ENCODE measurements at regions of chr1 and their contacts with region 1.

Region 1: GRCh38 chr1:164765557-164765956 is 206.6 kb downstream of the PBX1 start:
- DNase-seq: peak; percentile 93
- ATAC-seq: peak; percentile 52
- H3K4me3 ChIP-seq: no peak overlapping the region
- H3K27ac ChIP-seq: peak overlapping the region; percentile 38
- H3K4me1 ChIP-seq: peaks cover 26% of the 10 kb centered on the region
- H3K27me3 ChIP-seq: no peaks in the 10 kb centered on the region
- CTCF ChIP-seq: no peak
- POLR2A ChIP-seq: 0 out of 2 replicates have a peak, but pooled peaks have one; percentile 36
- RAD21 ChIP-seq: no peak

Region 2: GRCh38 chr1:164558461-164559341 is 206.9 kb before region 1 on chr1 and contains the start of gene PBX1:
- CTCF ChIA-PET with region 1: no interaction called
- POLR2A ChIA-PET with region 1: no interaction called
- dilution Hi-C with region 1: no loop called
- in situ Hi-C with region 1: no loop called
- intact Hi-C with region 1: loop called (anchors 1 kb)
- DNase-seq: peak; percentile 98
- ATAC-seq: peak; percentile 98
- H3K4me3 ChIP-seq: peak within 1 kb of the TSS; percentile 75
- H3K27ac ChIP-seq: peak within 1 kb of the TSS; percentile 99
- H3K4me1 ChIP-seq: no peaks in the 10 kb centered on the region
- H3K27me3 ChIP-seq: no peaks in the 10 kb centered on the region
- CTCF ChIP-seq: no peak
- POLR2A ChIP-seq: peak; percentile 88
- RAD21 ChIP-seq: no peak; the same call in 1 of the 2 replicates
- total RNA-seq, gene PBX1: 17.5 and 17.9 TPM in 2 replicates

Region 3: DNA sequence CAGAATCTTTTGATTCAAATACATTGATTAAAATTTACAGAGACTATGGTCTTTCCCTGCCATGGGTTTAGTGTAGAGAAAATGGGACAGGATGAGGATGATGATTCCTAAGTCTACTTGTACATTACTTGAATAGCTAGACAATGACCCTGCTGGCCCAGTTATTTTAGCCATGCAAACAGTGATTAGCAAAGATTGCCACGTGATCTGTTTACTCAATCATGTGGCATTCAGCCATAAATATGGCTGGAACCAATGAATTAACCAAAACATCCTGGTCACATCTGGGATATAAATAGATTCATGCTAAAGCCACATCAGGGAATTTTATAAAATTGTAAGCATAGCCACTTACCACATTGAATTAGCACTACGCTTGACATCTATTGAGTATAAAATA is 39.3 kb before region 1 on chr1:
- CTCF ChIA-PET with region 1: no interaction called
- POLR2A ChIA-PET with region 1: no interaction called
- dilution Hi-C with region 1: no loop called
- in situ Hi-C with region 1: no loop called
- intact Hi-C with region 1: loop called (anchors 1 kb)
- DNase-seq: peak; percentile 96
- ATAC-seq: peak; percentile 80
- H3K4me3 ChIP-seq: no peak overlapping the region
- H3K27ac ChIP-seq: no peak overlapping the region
- H3K4me1 ChIP-seq: peaks cover 19% of the 10 kb centered on the region
- H3K27me3 ChIP-seq: no peaks in the 10 kb centered on the region
- CTCF ChIP-seq: no peak
- POLR2A ChIP-seq: no peak
- RAD21 ChIP-seq: no peak

Region 4: GRCh38 chr1:164748253-164748899 is 17.2 kb before region 1 on chr1:
- CTCF ChIA-PET with region 1: interaction called, 6 read pairs
- POLR2A ChIA-PET with region 1: no interaction called
- dilution Hi-C with region 1: no loop called
- in situ Hi-C with region 1: no loop called
- intact Hi-C with region 1: loop called (anchors 2 kb)
- DNase-seq: peak; percentile 99
- ATAC-seq: peak; percentile 75
- H3K4me3 ChIP-seq: no peak overlapping the region
- H3K27ac ChIP-seq: peak overlapping the region; percentile 94
- H3K4me1 ChIP-seq: peaks cover 13% of the 10 kb centered on the region
- H3K27me3 ChIP-seq: no peaks in the 10 kb centered on the region
- CTCF ChIP-seq: no peak
- POLR2A ChIP-seq: no peak
- RAD21 ChIP-seq: peak; percentile 37; the same call in 1 of the 2 replicates